B cell (primary cell): ENCODE measurements at regions of chr2 and their contacts with region 1.

Region 1: DNA sequence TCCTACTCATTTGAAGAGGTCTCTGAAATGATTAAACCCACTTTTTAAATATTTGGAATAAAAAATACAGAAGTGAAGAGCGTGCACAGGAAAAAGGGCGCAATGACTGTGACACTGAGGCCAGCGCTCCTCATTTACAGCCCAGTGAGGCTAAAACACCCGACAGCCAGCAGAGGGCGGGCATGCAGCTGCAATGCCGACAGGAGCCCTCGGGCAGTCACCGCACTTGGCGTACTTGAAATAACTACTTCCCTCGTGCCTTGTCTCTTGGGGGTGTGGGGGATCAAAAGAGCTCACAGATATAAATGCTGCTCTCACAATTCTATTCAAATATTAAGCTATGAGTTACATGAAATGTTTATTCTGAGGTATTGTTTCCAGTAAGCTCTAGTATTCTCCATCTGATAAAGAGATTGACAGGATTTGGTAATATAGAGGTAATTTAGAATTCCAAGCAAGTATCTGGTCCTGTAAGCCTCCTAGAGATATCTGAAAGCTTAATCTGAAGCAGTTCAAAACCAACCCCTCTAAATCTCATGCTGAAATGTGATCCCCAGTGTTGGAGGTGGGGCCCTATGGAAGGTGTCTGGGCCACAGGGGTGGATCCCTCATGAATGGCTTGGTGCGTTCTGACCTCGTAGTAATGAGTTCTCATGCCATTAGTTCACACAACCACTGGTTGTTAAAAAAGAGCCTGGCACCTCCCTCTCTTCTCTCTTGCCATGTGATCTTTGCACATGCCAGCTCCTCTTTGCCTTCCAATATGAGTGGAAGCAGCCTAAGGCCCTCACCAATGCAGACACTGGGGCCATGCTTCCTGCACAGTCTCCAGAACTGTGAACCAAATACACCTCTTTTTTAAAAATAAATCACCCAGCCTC is 93.6 kb downstream of the ZAP70 start:
- DNase-seq: peak; percentile 86
- ATAC-seq: peak; percentile 97
- H3K4me3 ChIP-seq: no peak overlapping the region
- H3K4me3 Mint-ChIP-seq: no peak overlapping the region
- H3K27ac ChIP-seq: peak overlapping the region in 1 of 2 donors; percentile 56
- H3K27ac Mint-ChIP-seq: no peak overlapping the region
- H3K4me1 ChIP-seq: peaks cover 4 to 7% of the 10 kb centered on the region in 2 donors
- H3K4me1 Mint-ChIP-seq: no peaks in the 10 kb centered on the region
- H3K27me3 ChIP-seq: no peaks in the 10 kb centered on the region
- H3K27me3 Mint-ChIP-seq: no peaks in the 10 kb centered on the region
- CTCF ChIP-seq: peak; percentile 97

Region 2: DNA sequence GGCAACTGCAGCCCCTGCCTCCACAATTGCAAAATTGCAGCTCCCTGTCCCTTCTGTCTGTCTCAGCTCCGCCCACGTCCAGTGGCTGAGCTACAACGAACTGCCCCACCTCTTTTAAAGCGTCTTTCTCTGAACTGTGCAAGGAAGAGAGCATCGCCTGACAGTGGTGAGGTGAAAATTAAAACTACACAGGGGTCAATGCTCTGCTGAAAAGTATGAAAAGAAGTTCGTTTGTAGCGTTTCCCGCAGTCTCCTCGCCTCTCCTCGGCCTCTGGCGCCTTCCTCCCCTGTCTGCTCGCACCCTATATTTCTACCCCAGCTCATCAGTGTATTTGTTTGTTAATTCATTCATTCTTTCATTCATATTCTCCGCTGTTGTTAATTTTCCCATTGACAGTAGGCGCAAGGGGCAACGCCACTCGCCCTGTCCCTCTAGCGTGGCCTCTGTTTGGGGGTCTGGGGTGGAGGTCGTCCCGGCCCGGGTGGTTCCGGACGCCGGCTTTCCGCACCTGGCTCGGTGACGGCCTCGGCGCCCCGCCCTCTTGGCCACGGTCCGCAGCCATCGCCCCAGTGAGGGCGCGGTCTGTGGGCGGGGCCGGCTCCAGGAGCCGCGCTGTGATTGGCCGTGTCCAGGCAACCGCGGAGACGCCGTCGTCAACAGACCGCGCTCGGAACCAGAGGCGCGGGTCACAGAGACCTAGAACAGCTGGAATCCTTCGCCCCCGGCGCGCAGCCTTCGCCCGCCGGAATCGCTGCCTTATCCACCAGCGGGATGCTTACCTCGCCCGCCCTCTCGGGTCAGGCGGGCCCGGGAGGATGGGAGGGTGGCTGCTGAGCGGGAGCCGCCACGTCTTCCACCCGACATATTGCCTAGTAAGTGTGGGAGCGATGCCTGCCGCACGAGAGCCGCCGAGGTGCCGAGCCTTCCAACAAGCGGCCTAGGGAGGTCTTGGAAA is 279.8 kb after region 1 on chr2 and contains the start of gene VWA3B:
- CTCF ChIA-PET with region 1: interaction called, 8 read pairs
- POLR2A ChIA-PET with region 1: no interaction called
- intact Hi-C with region 1: loop called (anchors 5 kb)
- DNase-seq: peak; percentile 90
- ATAC-seq: peak; percentile 92
- H3K4me3 ChIP-seq: peak within 1 kb of the TSS; percentile 55 to 67 (median 57)
- H3K4me3 Mint-ChIP-seq: peak within 1 kb of the TSS; percentile 79
- H3K27ac ChIP-seq: peak within 1 kb of the TSS; percentile 33 to 54
- H3K27ac Mint-ChIP-seq: peak within 1 kb of the TSS; percentile 75
- H3K4me1 ChIP-seq: peaks cover 29 to 49% of the 10 kb centered on the region in 2 donors
- H3K4me1 Mint-ChIP-seq: peaks cover 47% of the 10 kb centered on the region
- H3K27me3 ChIP-seq: no peaks in the 10 kb centered on the region
- H3K27me3 Mint-ChIP-seq: no peaks in the 10 kb centered on the region
- CTCF ChIP-seq: no peak
- total RNA-seq, gene VWA3B: not detected in 2 replicates

Region 3: GRCh38 chr2:98175811-98176210 is 368.8 kb after region 1 on chr2:
- CTCF ChIA-PET with region 1: interaction called, 41 read pairs
- POLR2A ChIA-PET with region 1: no interaction called
- intact Hi-C with region 1: loop called (anchors 1 kb)
- DNase-seq: peak; percentile 55
- ATAC-seq: peak; percentile 61
- H3K4me3 ChIP-seq: no peak overlapping the region
- H3K4me3 Mint-ChIP-seq: no peak overlapping the region
- H3K27ac ChIP-seq: no peak overlapping the region
- H3K27ac Mint-ChIP-seq: no peak overlapping the region
- H3K4me1 ChIP-seq: peaks cover 0 to 5% of the 10 kb centered on the region in 2 donors
- H3K4me1 Mint-ChIP-seq: peaks cover 7% of the 10 kb centered on the region
- H3K27me3 ChIP-seq: peaks cover 0 to 10% (median 5%) of the 10 kb centered on the region in 4 experiments
- H3K27me3 Mint-ChIP-seq: peaks cover 20% of the 10 kb centered on the region
- CTCF ChIP-seq: peak; percentile 34

Region 4: DNA sequence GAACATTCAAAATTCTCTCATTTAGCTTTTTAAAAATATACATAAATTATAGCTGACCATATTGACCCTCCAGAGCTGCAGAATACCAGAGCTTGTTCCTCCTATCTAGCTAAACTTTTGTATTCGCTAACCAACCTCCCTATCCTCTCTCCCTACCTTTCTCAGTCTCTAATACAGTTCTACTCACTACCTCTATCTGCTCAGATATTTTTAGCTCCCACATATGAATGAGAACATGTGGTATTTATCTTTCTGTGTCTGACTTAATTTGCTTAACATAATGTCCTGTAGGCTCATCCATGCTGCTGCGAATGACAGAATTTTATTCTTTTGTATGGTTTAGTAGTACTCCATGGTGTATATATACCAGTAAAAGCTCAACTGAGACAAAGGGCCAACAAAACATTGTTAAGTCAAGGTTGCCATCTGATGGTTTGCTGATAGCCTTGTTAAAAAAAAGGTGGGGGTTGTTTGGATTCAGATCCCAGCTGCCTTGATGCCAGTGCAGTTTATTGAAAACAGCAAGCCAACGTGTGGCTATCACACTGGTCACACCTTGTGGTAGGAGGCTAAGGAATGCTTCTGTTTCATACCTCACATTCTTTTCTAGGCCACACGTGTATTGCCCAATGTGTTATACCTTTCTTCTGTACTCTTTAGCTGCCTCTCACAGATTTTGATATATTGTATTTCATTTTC is 381.5 kb after region 1 on chr2:
- CTCF ChIA-PET with region 1: interaction called, 48 read pairs
- POLR2A ChIA-PET with region 1: no interaction called
- intact Hi-C with region 1: loop called (anchors 1 kb)
- DNase-seq: peak; percentile 42
- ATAC-seq: no peak
- H3K4me3 ChIP-seq: no peak overlapping the region
- H3K4me3 Mint-ChIP-seq: no peak overlapping the region
- H3K27ac ChIP-seq: no peak overlapping the region
- H3K27ac Mint-ChIP-seq: no peak overlapping the region
- H3K4me1 ChIP-seq: no peaks in the 10 kb centered on the region
- H3K4me1 Mint-ChIP-seq: no peaks in the 10 kb centered on the region
- H3K27me3 ChIP-seq: no peaks in the 10 kb centered on the region
- H3K27me3 Mint-ChIP-seq: peaks cover 5% of the 10 kb centered on the region
- CTCF ChIP-seq: peak; percentile 15

Region 5: DNA sequence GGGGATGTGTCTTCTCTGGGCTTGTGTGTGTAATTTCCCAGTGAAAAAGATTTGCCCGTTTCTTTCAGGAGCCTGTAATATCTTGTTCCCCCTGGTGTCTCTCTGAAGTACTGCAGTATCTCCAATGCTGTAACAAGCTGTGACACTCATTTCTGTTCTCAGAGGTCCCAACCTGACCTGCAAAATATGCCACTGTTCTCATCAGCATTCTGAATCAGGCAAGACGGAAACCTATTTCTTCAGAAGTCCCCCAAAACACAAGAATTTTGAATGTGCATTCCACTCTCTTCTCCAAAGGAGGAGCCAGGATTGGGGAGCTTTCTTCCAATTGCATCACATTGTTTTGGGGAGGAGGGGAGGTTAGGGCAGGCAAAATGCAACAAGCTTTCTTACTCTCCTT is 462.3 kb after region 1 on chr2:
- CTCF ChIA-PET with region 1: interaction called, 54 read pairs
- POLR2A ChIA-PET with region 1: no interaction called
- intact Hi-C with region 1: loop called (anchors 1 kb)
- DNase-seq: peak; percentile 59
- ATAC-seq: peak; percentile 49
- H3K4me3 ChIP-seq: no peak overlapping the region
- H3K4me3 Mint-ChIP-seq: no peak overlapping the region
- H3K27ac ChIP-seq: no peak overlapping the region
- H3K27ac Mint-ChIP-seq: no peak overlapping the region
- H3K4me1 ChIP-seq: no peaks in the 10 kb centered on the region
- H3K4me1 Mint-ChIP-seq: no peaks in the 10 kb centered on the region
- H3K27me3 ChIP-seq: no peaks in the 10 kb centered on the region
- H3K27me3 Mint-ChIP-seq: peaks cover 1% of the 10 kb centered on the region
- CTCF ChIP-seq: peak; percentile 73

Region 6: GRCh38 chr2:98385050-98385699 is 578.2 kb after region 1 on chr2:
- CTCF ChIA-PET with region 1: interaction called, 57 read pairs
- POLR2A ChIA-PET with region 1: no interaction called
- intact Hi-C with region 1: no loop called
- DNase-seq: peak; percentile 78
- ATAC-seq: peak; percentile 88
- H3K4me3 ChIP-seq: no peak overlapping the region
- H3K4me3 Mint-ChIP-seq: no peak overlapping the region
- H3K27ac ChIP-seq: no peak overlapping the region
- H3K27ac Mint-ChIP-seq: no peak overlapping the region
- H3K4me1 ChIP-seq: peaks cover 0 to 2% of the 10 kb centered on the region in 2 donors
- H3K4me1 Mint-ChIP-seq: no peaks in the 10 kb centered on the region
- H3K27me3 ChIP-seq: no peaks in the 10 kb centered on the region
- H3K27me3 Mint-ChIP-seq: peaks cover 14% of the 10 kb centered on the region
- CTCF ChIP-seq: peak; percentile 94